ENCODE measurements at regions of chr10 and their contacts with region 1.

Region 1: GRCh38 chr10:119290291-119291048 is 83.1 kb downstream of the GRK5 start:
- DNase-seq: peak; percentile 49 to 89
- H3K4me3 ChIP-seq: no peak overlapping the region; the same call in 1 of the 2 replicates
- H3K27ac ChIP-seq: peak overlapping the region; percentile 73
- H3K4me1 ChIP-seq: peaks cover 28% of the 10 kb centered on the region
- H3K27me3 ChIP-seq: no peaks in the 10 kb centered on the region
- CTCF ChIP-seq: peak; percentile 47; the same call in 1 of the 2 replicates

Region 2: DNA sequence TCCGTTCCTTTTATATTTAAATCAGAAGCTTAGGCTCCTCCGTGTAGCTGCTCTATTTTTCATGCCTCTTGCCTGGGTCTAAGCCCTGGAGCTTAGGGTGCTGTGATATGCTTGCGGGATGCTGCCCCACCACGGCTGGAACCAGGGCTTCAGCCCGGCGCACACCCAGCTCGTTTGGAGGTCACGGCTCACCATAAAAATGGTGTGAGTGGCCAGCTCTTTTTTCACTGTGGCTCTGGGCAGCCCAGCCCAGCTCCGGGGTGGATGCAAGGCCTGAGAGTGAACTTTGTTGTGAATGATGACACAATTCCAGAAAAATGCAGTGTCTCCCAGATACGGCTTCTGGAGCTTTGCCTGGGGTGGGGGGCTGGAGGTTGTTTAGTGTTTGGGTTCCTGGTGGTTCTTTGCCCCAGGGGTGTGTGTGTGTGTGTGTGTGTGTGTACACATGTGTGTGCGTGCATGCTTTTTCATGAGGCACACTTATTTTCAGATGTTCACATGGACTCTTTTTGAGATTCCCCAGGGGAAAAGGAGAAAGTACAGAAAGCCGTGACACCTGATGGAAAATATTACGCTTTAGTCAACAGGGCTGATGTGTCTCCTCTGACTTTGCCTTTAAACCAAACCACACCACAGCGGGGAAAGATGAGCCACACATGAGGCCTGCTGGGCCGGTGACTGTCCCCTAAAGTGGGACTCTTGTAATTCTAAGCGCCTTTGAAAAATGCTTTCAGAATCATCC is 36.9 kb before region 1 on chr10:
- CTCF ChIA-PET with region 1: interaction called, 3 read pairs
- POLR2A ChIA-PET with region 1: no interaction called
- intact Hi-C with region 1: loop called (anchors 1 kb)
- DNase-seq: peak; percentile 73 to 80
- H3K4me3 ChIP-seq: peak overlapping the region; percentile 24; the same call in 1 of the 2 replicates
- H3K27ac ChIP-seq: peak overlapping the region; percentile 97
- H3K4me1 ChIP-seq: peaks cover 40% of the 10 kb centered on the region
- H3K27me3 ChIP-seq: no peaks in the 10 kb centered on the region
- CTCF ChIP-seq: no peak

Region 3: GRCh38 chr10:119305860-119306513 is 15.5 kb after region 1 on chr10:
- CTCF ChIA-PET with region 1: interaction called, 3 read pairs
- POLR2A ChIA-PET with region 1: interaction called, 26 read pairs
- intact Hi-C with region 1: loop called (anchors 2 kb)
- DNase-seq: peak; percentile 79 to 93
- H3K4me3 ChIP-seq: peak overlapping the region; percentile 47; the same call in 1 of the 2 replicates
- H3K27ac ChIP-seq: peak overlapping the region; percentile 86
- H3K4me1 ChIP-seq: peaks cover 62% of the 10 kb centered on the region
- H3K27me3 ChIP-seq: no peaks in the 10 kb centered on the region
- CTCF ChIP-seq: no peak

Region 4: DNA sequence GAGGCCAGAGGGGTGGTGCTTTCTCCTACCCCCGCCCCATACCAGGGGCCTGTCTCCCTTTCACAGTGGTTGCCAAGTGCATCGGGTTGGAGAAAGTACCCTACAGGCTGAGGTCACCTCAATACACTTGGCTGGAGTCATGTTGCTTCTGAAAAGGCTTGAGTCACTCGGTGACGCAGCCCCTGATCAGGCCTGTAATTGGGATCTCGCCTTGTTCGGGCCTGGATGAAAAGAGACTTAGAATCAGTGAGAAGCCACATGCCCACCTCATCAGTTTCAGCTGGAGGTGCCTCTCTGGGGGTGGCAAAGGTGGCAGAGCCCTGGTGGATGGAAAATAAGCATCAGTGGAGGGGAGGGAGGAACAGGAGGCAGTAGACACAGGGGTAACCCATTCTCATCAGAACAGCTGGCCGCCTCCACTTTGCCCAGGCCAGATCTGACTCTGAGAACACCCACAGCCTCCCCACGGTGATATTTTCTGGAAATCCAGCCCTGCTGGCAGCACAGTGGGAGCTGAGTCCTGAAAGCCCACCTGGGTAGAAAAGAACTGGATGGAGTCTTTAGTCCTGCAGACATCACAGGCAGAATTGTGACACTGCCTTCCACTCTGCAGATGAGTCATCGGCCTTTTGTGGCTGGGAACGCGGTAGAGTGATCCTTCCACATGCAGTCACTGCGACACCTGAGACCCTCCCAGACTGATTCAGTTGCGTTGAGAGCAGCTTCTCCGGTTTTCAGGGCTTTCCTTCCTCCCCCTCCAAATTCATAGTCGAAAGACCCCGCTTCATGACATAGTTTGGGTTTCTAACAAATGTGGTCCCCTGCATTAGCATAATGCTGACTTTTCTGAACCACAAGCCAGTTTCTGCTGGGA is 24.9 kb after region 1 on chr10:
- CTCF ChIA-PET with region 1: no interaction called
- POLR2A ChIA-PET with region 1: no interaction called
- intact Hi-C with region 1: loop called (anchors 2 kb)
- DNase-seq: peak; percentile 68 to 86
- H3K4me3 ChIP-seq: 0 out of 2 replicates have a peak overlapping the region, but pooled peaks have one; percentile 7
- H3K27ac ChIP-seq: peak overlapping the region; percentile 96
- H3K4me1 ChIP-seq: peaks cover 46% of the 10 kb centered on the region
- H3K27me3 ChIP-seq: no peaks in the 10 kb centered on the region
- CTCF ChIP-seq: no peak

Region 5: GRCh38 chr10:119395280-119395989 is 105.0 kb after region 1 on chr10:
- CTCF ChIA-PET with region 1: no interaction called
- POLR2A ChIA-PET with region 1: no interaction called
- intact Hi-C with region 1: no loop called
- DNase-seq: no peak
- H3K4me3 ChIP-seq: no peak overlapping the region
- H3K27ac ChIP-seq: no peak overlapping the region
- H3K4me1 ChIP-seq: no peaks in the 10 kb centered on the region
- H3K27me3 ChIP-seq: no peaks in the 10 kb centered on the region
- CTCF ChIP-seq: no peak

Region 6: DNA sequence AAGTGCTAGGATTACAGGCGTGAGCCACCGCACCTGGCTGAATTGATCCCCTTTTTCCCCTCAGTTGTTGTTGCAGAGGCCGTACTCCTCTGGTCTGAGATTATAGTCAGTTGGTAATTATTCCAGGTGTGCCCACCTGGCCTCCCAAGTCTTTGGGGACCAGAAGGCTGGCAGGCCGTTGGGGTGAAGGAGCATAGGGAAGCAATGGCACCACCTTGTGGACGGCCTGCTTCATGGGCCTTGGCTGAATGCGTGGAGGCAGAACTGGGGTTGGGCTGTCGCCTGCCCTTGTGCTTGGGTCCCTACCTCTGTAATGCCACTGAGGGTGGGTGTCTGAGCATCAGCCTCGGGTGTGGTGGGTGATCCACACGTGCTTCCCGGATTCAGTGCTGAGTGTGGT is 126.4 kb after region 1 on chr10:
- CTCF ChIA-PET with region 1: no interaction called
- POLR2A ChIA-PET with region 1: no interaction called
- intact Hi-C with region 1: loop called (anchors 2 kb)
- DNase-seq: peak in 1 of 2 experiments; percentile 55
- H3K4me3 ChIP-seq: no peak overlapping the region
- H3K27ac ChIP-seq: no peak overlapping the region
- H3K4me1 ChIP-seq: no peaks in the 10 kb centered on the region
- H3K27me3 ChIP-seq: no peaks in the 10 kb centered on the region
- CTCF ChIP-seq: peak; percentile 78

Measured in PC-9 (cell line).